ENCODE measurements at regions of chr10 and their contacts with region 1.

Region 1: GRCh38 chr10:86556568-86557276 is 35.1 kb upstream of the WAPL start:
- DNase-seq: no peak
- H3K4me3 ChIP-seq: no peak overlapping the region
- H3K27ac ChIP-seq: no peak overlapping the region
- H3K4me1 ChIP-seq: no peaks in the 10 kb centered on the region
- H3K27me3 ChIP-seq: no peaks in the 10 kb centered on the region
- CTCF ChIP-seq: no peak
- EP300 ChIP-seq: no peak
- POLR2A ChIP-seq: no peak

Region 2: DNA sequence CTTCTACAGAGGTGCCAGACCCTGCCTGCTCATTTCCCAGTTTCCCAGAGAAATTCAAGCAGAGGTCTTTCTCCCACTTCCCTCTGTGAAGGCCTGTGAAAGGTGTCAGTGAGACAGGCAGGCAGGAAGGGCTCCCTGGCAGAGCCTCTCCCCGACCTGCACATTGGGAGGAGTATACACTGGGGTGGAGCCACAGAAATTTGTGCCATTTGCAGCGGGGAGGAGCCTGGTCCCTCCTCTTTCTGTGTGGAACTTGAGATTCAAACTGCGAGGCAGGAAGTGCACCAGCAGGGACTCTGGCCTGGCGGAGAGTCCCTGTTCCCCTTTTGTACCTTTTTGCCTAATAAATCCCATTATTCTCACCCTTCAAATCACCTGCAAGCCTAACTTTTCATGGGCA is 43.0 kb after region 1 on chr10:
- in situ Hi-C with region 1: no loop called
- intact Hi-C with region 1: loop called (anchors 1 kb)
- DNase-seq: peak; percentile 64
- H3K4me3 ChIP-seq: no peak overlapping the region
- H3K27ac ChIP-seq: peak overlapping the region in 1 of 4 donors; percentile 56
- H3K4me1 ChIP-seq: peaks cover 0 to 4% (median 0%) of the 10 kb centered on the region in 4 donors
- H3K27me3 ChIP-seq: no peaks in the 10 kb centered on the region
- CTCF ChIP-seq: no peak
- EP300 ChIP-seq: no peak
- POLR2A ChIP-seq: no peak

Measured in transverse colon (tissue), 4 donors.